ENCODE measurements at regions of chr6 and their contacts with region 1.

Region 1: GRCh38 chr6:136289579-136290409 is at the start of gene BCLAF1:
- DNase-seq: peak; percentile 99
- H3K4me3 ChIP-seq: peak within 1 kb of the TSS; percentile 85
- H3K27ac ChIP-seq: peak within 1 kb of the TSS; percentile 100
- H3K4me1 ChIP-seq: peaks cover 17% of the 10 kb centered on the region
- H3K27me3 ChIP-seq: no peaks in the 10 kb centered on the region
- CTCF ChIP-seq: no peak
- total RNA-seq, gene BCLAF1: 272 and 284 TPM in 2 replicates

Region 2: GRCh38 chr6:135951169-135951568 is 338.6 kb before region 1 on chr6:
- CTCF ChIA-PET with region 1: no interaction called
- POLR2A ChIA-PET with region 1: no interaction called
- intact Hi-C with region 1: no loop called
- DNase-seq: no peak
- H3K4me3 ChIP-seq: no peak overlapping the region
- H3K27ac ChIP-seq: no peak overlapping the region
- H3K4me1 ChIP-seq: no peaks in the 10 kb centered on the region
- H3K27me3 ChIP-seq: peaks cover 86% of the 10 kb centered on the region
- CTCF ChIP-seq: no peak

Region 3: DNA sequence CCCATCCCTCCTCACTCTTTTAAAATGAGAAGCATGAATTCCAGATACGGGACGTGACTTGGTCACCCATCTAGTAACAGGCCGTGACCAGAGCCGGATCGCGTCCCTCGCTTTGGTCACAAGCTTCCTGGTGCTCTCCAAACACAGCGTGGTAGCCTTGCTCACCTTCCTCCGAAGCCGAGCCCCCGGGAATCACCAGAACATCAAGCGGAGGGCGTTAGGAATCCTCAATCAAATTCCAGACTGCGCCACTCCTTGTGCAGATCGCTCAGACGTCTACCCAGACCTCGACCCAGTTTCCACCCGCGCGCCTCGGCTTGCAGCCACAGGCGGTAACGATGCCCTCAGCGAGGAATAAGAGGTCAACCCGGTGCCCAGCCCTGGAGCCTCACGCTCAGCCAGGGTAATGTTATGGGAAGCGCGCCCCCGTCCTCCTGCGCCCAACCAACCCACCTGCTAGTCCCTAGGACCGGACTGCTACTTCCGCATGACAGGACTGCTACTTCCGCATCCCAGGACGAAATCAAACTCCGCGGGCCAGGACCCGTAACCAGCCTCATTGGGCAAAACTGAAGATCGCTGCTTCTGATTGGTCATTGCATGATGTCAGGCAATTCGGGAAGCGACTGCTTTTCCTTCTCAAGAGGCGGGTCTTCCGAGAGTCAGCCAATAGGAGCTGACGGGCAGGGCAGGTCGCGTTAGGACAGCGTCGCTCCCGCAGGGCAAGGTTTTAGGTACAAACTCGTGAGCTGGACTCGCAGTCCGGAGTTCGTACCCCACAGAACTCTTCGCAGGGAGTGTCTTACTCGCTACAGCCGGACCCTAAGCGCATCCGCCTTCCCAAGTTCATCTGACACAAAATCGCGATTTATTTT is 39.7 kb before region 1 on chr6 and contains the start of gene MTFR2:
- CTCF ChIA-PET with region 1: no interaction called
- POLR2A ChIA-PET with region 1: no interaction called
- intact Hi-C with region 1: loop called (anchors 2 kb)
- DNase-seq: peak; percentile 99
- H3K4me3 ChIP-seq: peak within 1 kb of the TSS; percentile 77
- H3K27ac ChIP-seq: peak within 1 kb of the TSS; percentile 62
- H3K4me1 ChIP-seq: peaks cover 7% of the 10 kb centered on the region
- H3K27me3 ChIP-seq: no peaks in the 10 kb centered on the region
- CTCF ChIP-seq: no peak
- total RNA-seq, gene MTFR2: 10.1 and 12.6 TPM in 2 replicates